ENCODE measurements at regions of chr2 and their contacts with region 1.

Region 1: GRCh38 chr2:230798769-230799399 is 65.9 kb upstream of the ITM2C start:
- DNase-seq: peak in 1 of 2 experiments; percentile 57
- H3K4me3 ChIP-seq: no peak overlapping the region
- H3K4me3 Mint-ChIP-seq: no peak overlapping the region
- H3K27ac Mint-ChIP-seq: no peak overlapping the region
- H3K4me1 ChIP-seq: no peaks in the 10 kb centered on the region; the same call in 1 of the 2 replicates
- H3K4me1 Mint-ChIP-seq: no peaks in the 10 kb centered on the region
- H3K27me3 ChIP-seq: no peaks in the 10 kb centered on the region
- H3K27me3 Mint-ChIP-seq: no peaks in the 10 kb centered on the region
- CTCF ChIP-seq: peak; percentile 49 to 51

Region 2: GRCh38 chr2:230614913-230615332 is 184.0 kb before region 1 on chr2:
- CTCF ChIA-PET with region 1: no interaction called
- POLR2A ChIA-PET with region 1: no interaction called
- intact Hi-C with region 1: loop called (anchors 5 kb)
- DNase-seq: no peak
- H3K4me3 ChIP-seq: no peak overlapping the region
- H3K4me3 Mint-ChIP-seq: no peak overlapping the region
- H3K27ac Mint-ChIP-seq: no peak overlapping the region
- H3K4me1 ChIP-seq: no peaks in the 10 kb centered on the region
- H3K4me1 Mint-ChIP-seq: no peaks in the 10 kb centered on the region
- H3K27me3 ChIP-seq: no peaks in the 10 kb centered on the region
- H3K27me3 Mint-ChIP-seq: peaks cover 6% of the 10 kb centered on the region
- CTCF ChIP-seq: no peak

Region 3: GRCh38 chr2:230650585-230651137 is 148.2 kb before region 1 on chr2:
- CTCF ChIA-PET with region 1: no interaction called
- POLR2A ChIA-PET with region 1: no interaction called
- intact Hi-C with region 1: loop called (anchors 2 kb)
- DNase-seq: peak; percentile 59 to 63
- H3K4me3 ChIP-seq: no peak overlapping the region
- H3K4me3 Mint-ChIP-seq: peak overlapping the region; percentile 27
- H3K27ac Mint-ChIP-seq: peak overlapping the region; percentile 5
- H3K4me1 ChIP-seq: peaks cover 8% of the 10 kb centered on the region; the same call in 1 of the 2 replicates
- H3K4me1 Mint-ChIP-seq: peaks cover 12% of the 10 kb centered on the region
- H3K27me3 ChIP-seq: no peaks in the 10 kb centered on the region
- H3K27me3 Mint-ChIP-seq: no peaks in the 10 kb centered on the region
- CTCF ChIP-seq: no peak

Region 4: DNA sequence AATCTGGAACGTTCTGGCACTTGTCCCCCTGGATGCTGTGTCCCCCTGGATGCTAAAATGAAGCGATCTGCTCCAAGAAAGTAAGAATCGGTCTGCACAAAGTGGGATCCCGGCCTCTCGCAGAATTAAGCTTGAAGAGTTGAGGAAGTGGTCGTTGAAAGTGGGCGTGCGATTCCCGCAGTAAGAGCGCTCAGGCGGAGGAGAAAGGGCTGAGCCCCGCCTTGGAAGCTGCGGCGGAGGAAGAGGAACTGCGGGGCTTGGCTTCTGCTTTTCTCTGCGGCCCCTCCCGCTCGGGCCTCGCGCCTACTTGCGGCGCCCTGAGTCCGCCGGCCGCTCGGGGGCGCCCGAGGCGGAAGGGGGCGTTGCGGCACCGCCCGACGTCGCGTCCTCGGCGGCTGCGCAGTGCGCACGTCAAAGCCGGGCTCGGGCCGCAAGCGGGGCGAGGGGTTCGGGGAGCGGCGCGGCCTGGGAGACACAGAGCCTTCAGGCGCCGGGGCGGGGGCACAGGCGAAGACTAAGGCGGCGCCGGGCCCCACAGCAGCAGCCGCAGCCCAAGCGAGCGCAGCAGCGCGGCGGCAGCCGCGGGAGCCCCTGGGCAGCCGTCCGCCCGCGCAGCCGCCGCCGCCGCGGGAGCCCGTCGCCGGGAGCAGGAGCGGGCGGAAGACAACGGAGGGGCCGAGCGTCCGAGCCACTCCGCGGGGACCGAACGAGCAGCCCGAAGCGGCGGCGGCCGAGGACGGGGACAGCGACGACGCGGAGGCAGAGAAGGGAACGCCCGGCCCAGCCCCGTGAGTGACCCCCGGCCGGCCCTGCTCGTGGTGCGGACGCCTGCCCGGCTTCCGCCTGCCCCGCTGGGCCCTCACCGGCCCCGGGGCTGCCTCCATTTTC is 86.2 kb before region 1 on chr2 and contains the start of gene CAB39:
- CTCF ChIA-PET with region 1: interaction called, 7 read pairs
- POLR2A ChIA-PET with region 1: no interaction called
- intact Hi-C with region 1: loop called (anchors 1 kb)
- DNase-seq: peak; percentile 74 to 88
- H3K4me3 ChIP-seq: peak within 1 kb of the TSS; percentile 72
- H3K4me3 Mint-ChIP-seq: peak within 1 kb of the TSS; percentile 95
- H3K27ac Mint-ChIP-seq: peak within 1 kb of the TSS; percentile 95
- H3K4me1 ChIP-seq: peaks cover 8% of the 10 kb centered on the region; the same call in 1 of the 2 replicates
- H3K4me1 Mint-ChIP-seq: peaks cover 16% of the 10 kb centered on the region
- H3K27me3 ChIP-seq: no peaks in the 10 kb centered on the region
- H3K27me3 Mint-ChIP-seq: no peaks in the 10 kb centered on the region
- CTCF ChIP-seq: peak; percentile 40 to 46
- total RNA-seq, gene CAB39: 33.2 and 40.4 TPM in 2 replicates

Region 5: DNA sequence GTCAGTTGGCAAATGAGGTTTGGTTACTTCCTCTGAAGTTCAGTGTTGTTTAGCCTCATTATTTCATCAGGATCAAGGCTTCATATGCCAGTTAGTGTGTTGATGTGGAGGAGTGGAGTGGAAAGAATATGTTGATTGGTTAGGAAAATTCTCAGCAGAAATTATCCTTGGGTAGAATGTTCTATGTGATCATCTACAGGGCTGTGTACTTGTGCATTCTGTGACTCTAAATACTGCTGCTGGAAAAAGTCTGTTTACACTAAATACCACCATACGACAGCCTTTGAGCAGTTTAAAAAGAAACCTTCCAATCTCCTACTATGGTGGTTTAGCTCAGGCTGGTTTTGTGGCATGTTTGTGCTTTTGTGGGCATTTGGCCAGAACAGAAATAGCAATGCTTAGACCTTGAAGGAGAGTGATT is 60.5 kb before region 1 on chr2:
- CTCF ChIA-PET with region 1: no interaction called
- POLR2A ChIA-PET with region 1: no interaction called
- intact Hi-C with region 1: loop called (anchors 2 kb)
- DNase-seq: no peak
- H3K4me3 ChIP-seq: peak overlapping the region; percentile 3; the same call in 1 of the 2 replicates
- H3K4me3 Mint-ChIP-seq: peak overlapping the region; percentile 57
- H3K27ac Mint-ChIP-seq: peak overlapping the region; percentile 36
- H3K4me1 ChIP-seq: peaks cover 50% of the 10 kb centered on the region
- H3K4me1 Mint-ChIP-seq: peaks cover 16% of the 10 kb centered on the region
- H3K27me3 ChIP-seq: no peaks in the 10 kb centered on the region
- H3K27me3 Mint-ChIP-seq: no peaks in the 10 kb centered on the region
- CTCF ChIP-seq: no peak

Region 6: DNA sequence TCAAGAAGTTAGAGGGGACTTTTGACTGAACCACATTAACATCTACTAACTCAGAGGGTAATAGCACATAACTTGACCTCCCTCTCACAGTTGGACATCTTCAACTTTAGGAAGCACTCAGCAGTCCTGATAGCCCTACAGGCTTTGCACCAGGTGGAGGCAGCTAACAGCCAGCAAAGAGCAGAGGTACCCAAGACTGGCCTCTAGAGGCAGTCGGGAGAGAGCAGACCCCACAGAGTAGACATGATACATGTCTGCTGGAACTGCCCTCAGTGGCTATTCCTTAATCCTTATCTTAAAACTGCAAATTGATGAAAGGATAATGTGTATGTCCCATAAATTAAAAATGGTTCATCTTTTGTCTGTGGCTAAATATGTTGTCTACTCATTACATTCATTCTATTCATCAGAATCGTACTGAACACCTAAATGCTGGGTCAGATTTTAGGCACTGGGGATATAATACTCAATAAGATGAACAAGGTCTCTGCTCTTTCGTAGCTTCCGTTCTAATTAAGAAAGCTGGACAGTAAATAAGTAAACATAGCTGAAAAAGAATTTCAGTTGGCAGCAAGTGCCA is 36.5 kb before region 1 on chr2:
- CTCF ChIA-PET with region 1: interaction called, 3 read pairs
- POLR2A ChIA-PET with region 1: no interaction called
- intact Hi-C with region 1: loop called (anchors 5 kb)
- DNase-seq: peak; percentile 51 to 62
- H3K4me3 ChIP-seq: no peak overlapping the region
- H3K4me3 Mint-ChIP-seq: no peak overlapping the region
- H3K27ac Mint-ChIP-seq: no peak overlapping the region
- H3K4me1 ChIP-seq: peaks cover 10% of the 10 kb centered on the region; the same call in 1 of the 2 replicates
- H3K4me1 Mint-ChIP-seq: peaks cover 14% of the 10 kb centered on the region
- H3K27me3 ChIP-seq: no peaks in the 10 kb centered on the region
- H3K27me3 Mint-ChIP-seq: no peaks in the 10 kb centered on the region
- CTCF ChIP-seq: peak; percentile 30 to 68

Region 7: DNA sequence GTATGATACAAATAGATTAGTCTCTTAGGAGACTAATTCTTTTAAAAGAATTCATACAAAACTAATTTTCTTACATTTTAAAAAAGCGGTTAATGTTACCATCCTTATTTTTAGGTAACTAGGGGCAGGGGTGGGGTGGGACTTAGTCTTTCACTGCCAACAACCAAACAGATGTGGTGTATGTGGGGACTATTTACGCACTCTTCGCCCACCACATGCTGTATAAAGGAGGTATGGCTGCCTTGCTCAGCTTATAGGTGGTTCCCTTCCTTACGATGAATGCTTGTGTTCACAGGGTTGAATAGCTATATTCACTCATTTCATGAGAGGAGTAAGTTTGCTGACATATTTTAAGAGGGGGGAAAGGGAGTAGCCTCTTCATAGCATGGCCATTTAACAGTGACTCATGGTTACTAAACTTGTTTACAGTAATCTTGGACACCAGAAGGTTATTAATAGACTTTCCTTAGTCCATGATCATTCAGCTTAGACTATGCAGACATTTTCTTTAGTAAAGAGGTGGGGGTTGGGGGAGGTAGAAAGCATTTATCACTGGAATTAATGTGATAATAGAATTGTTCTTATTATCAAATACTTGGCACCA is 24.4 kb before region 1 on chr2:
- CTCF ChIA-PET with region 1: no interaction called
- POLR2A ChIA-PET with region 1: no interaction called
- intact Hi-C with region 1: no loop called
- DNase-seq: no peak
- H3K4me3 ChIP-seq: no peak overlapping the region
- H3K4me3 Mint-ChIP-seq: no peak overlapping the region
- H3K27ac Mint-ChIP-seq: no peak overlapping the region
- H3K4me1 ChIP-seq: no peaks in the 10 kb centered on the region
- H3K4me1 Mint-ChIP-seq: peaks cover under 1% of the 10 kb centered on the region
- H3K27me3 ChIP-seq: no peaks in the 10 kb centered on the region
- H3K27me3 Mint-ChIP-seq: no peaks in the 10 kb centered on the region
- CTCF ChIP-seq: no peak